ENCODE measurements at regions of chr13 and their contacts with region 1.

Region 1: DNA sequence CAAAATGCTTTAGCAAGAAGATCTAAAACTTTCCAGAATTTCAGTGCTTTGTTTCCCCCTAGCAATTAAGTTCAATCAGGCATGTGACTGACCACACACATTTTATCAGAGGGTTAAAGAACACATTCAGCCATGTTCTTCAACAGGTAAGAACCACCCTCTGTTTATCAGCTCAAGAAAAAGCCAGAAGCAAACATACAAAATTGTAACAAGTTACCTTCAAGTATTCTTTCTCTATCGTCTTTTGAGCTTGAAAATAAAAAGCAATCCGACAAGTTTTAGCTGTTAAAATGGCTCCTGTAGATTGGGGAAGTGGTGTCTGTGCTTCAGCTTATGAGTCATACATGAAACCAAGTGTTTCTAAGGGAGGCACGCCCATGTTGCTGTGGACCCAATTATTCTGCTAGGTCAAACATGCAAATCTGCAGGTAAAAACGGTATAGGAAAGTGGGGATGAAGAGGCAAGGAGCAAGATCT is at the start of gene ELF1:
- DNase-seq: peak; percentile 92 to 96 (median 95)
- H3K4me3 ChIP-seq: peak within 1 kb of the TSS in 6 of 7 experiments; percentile 69 to 100 (median 88)
- H3K27ac ChIP-seq: peak within 1 kb of the TSS; percentile 100
- H3K4me1 ChIP-seq: peaks cover 25 to 53% (median 35%) of the 10 kb centered on the region in 4 experiments
- H3K27me3 ChIP-seq: no peaks in the 10 kb centered on the region

Region 2: GRCh38 chr13:40485611-40486517 is 533.2 kb before region 1 on chr13:
- CTCF ChIA-PET with region 1: no interaction called
- POLR2A ChIA-PET with region 1: no interaction called
- DNase-seq: peak in 1 of 3 donors; percentile 5
- H3K4me3 ChIP-seq: no peak overlapping the region
- H3K27ac ChIP-seq: no peak overlapping the region
- H3K4me1 ChIP-seq: no peaks in the 10 kb centered on the region
- H3K27me3 ChIP-seq: peaks cover 0 to 4% (median 0%) of the 10 kb centered on the region in 5 experiments

Region 3: GRCh38 chr13:40692946-40693345 is 326.1 kb before region 1 on chr13:
- CTCF ChIA-PET with region 1: no interaction called
- POLR2A ChIA-PET with region 1: no interaction called
- DNase-seq: peak in 1 of 3 donors; percentile 12
- H3K4me3 ChIP-seq: no peak overlapping the region
- H3K27ac ChIP-seq: no peak overlapping the region
- H3K4me1 ChIP-seq: no peaks in the 10 kb centered on the region
- H3K27me3 ChIP-seq: no peaks in the 10 kb centered on the region

Region 4: GRCh38 chr13:40984668-40985366 is 34.2 kb before region 1 on chr13:
- CTCF ChIA-PET with region 1: interaction called, 12 read pairs
- POLR2A ChIA-PET with region 1: interaction called, 3 read pairs
- DNase-seq: peak; percentile 54 to 78 (median 70)
- H3K4me3 ChIP-seq: peak overlapping the region in 6 of 7 experiments; percentile 51 to 97 (median 64)
- H3K27ac ChIP-seq: peak overlapping the region; percentile 98 to 99
- H3K4me1 ChIP-seq: peaks cover 41 to 79% (median 57%) of the 10 kb centered on the region in 4 experiments
- H3K27me3 ChIP-seq: no peaks in the 10 kb centered on the region

Region 5: DNA sequence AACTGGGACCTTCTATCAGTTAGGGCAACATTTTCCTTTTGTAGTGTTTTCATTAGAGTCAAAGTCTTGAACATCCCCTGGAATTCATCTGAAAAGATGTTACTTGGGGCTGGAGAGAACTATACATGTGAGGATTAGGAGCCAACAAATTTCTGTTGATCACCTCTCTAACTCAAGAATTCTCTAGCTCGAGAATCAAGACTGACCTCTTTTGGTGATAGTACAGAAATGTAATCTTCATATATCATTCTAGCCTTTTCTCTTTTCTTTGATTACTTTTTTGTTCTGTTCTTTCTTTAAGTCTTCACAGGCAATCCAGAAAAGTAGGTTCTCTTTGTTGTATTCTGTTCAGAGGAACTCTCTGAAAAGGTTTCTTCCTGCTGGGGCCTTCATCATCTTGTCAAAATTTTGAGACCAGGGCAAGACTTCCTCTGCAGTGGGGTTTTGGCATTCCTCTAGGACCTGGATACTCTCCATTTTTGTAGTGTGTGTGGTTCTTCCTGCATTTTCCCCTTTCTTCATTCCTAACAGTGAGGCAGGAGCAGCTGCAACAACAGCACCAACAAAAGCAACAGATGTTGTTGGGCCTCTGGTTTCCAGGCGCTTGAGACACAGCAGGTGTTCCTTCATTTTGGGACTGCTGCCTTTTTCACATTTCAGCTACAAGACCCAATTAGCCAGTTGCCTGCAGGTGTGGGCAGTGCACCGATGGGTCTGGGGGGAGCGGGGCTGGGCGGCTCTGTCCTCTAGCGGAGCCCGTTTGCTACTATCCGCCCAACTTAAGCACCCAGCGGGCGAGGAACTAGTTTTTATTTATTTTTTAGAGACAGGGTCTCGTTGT is 26.2 kb before region 1 on chr13:
- CTCF ChIA-PET with region 1: interaction called, 12 read pairs
- POLR2A ChIA-PET with region 1: interaction called, 5 read pairs
- DNase-seq: no peak
- H3K4me3 ChIP-seq: no peak overlapping the region
- H3K27ac ChIP-seq: peak overlapping the region; percentile 27 to 71
- H3K4me1 ChIP-seq: peaks cover 26 to 86% (median 64%) of the 10 kb centered on the region in 4 experiments
- H3K27me3 ChIP-seq: no peaks in the 10 kb centered on the region

Region 6: DNA sequence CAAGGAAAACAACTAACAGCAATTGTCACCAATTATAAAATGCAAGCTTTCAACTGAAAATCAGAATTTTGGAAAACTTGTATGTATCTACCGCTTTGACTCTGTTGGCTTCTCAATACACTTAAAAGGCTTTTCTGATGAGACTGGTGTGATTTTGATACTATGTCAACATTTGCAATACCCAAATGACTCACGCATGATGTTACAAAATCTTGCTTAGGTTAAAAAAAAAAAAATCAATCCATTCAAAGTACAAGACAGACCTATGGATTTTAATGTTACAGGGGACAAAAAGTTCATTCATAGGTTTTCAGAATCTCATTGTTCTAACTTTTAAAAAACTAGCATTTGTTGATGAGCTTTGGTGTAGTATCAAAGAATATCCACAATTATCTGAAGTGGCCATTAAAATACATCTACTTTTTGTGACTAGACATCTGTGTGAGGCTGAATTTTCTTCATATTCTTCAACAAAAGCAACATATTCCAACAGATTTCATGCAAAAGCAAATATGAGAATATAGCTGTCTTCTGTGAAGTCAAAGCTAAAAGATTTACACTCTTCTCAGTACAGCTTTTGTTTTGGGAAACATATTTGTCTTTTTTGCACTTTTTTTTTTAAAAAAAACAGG is 10.6 kb before region 1 on chr13:
- CTCF ChIA-PET with region 1: interaction called, 15 read pairs
- POLR2A ChIA-PET with region 1: interaction called, 9 read pairs
- DNase-seq: peak in 2 of 3 donors; percentile 61 to 71
- H3K4me3 ChIP-seq: peak overlapping the region in 1 of 7 experiments; percentile 47
- H3K27ac ChIP-seq: peak overlapping the region; percentile 59 to 92
- H3K4me1 ChIP-seq: peaks cover 52 to 84% (median 69%) of the 10 kb centered on the region in 4 experiments
- H3K27me3 ChIP-seq: no peaks in the 10 kb centered on the region

Region 7: DNA sequence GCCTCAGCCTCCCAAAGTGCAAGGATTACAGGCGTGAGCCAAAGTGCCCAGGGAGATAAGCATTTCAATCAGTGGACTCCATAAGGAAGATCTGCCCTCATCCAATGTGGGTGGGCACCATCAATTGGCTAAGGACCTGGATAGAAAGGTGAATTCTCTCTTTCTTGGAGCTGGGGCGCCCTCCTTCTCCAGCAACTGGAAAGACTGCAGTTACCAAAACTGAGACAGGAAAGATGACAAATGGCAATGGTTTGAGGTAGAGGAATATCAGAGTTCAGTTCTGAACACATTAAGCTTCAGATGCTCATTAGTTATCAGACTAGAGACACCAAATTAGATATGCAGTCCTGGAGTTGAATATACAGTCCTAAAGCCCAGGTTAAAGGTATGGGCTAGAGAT is 10.6 kb after region 1 on chr13:
- CTCF ChIA-PET with region 1: interaction called, 18 read pairs
- POLR2A ChIA-PET with region 1: interaction called, 3 read pairs
- DNase-seq: peak; percentile 43 to 55 (median 52)
- H3K4me3 ChIP-seq: no peak overlapping the region
- H3K27ac ChIP-seq: no peak overlapping the region
- H3K4me1 ChIP-seq: peaks cover 3 to 16% (median 10%) of the 10 kb centered on the region in 4 experiments
- H3K27me3 ChIP-seq: no peaks in the 10 kb centered on the region

Region 8: GRCh38 chr13:41040606-41041319 is 21.7 kb after region 1 on chr13:
- CTCF ChIA-PET with region 1: no interaction called
- POLR2A ChIA-PET with region 1: no interaction called
- DNase-seq: no peak
- H3K4me3 ChIP-seq: no peak overlapping the region
- H3K27ac ChIP-seq: no peak overlapping the region
- H3K4me1 ChIP-seq: no peaks in the 10 kb centered on the region
- H3K27me3 ChIP-seq: no peaks in the 10 kb centered on the region

Measured in common myeloid progenitor, CD34-positive (primary cell).